ENCODE measurements at regions of chr4 and their contacts with region 1.

Region 1: DNA sequence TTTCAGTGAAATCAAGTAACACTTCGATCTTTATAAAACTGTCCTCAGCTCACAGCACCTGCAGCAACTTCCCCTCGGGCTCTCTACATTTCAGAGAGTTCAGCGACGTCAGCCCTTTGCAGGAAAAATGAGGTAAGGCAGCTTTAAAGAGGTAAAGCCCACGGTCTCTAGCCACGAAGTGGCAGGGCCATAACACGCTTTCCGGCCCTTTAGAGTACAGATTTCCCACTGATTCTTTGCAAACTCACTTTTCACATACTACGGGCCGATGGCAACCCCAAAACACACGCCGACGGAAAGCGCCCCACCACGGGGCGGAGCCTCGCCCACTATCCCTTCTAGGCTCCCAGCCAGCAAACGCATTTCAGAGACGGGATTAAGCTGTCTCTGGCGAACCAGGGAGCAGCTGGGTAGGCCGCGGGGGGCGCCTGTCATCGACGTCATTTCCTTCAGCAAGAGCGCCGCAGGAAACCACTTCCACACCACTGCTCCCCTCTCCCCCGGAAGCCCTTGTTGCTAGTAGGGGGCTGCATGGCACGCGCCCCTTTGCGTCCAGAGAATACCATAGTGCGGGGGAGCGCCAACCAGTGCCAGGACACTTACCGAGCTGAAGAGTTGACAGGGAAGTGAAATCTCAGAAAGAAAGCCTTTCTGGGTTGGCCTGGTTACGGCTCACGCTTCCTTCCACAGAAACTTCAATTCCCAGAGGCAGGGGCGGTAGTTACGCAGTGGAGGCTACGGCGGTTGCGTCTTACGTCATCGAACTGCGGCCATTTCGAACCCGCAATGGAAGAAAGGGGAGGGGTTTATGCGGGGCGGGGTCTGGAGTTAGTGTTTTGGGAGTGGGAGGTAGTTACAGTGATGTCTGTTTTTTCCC is at the start of gene TRMT10A:
- DNase-seq: peak; percentile 98
- ATAC-seq: peak; percentile 84
- H3K4me3 ChIP-seq: peak within 1 kb of the TSS; percentile 73 to 92 (median 80)
- H3K4me3 Mint-ChIP-seq: peak within 1 kb of the TSS; percentile 99
- H3K27ac ChIP-seq: peak within 1 kb of the TSS; percentile 96
- H3K27ac Mint-ChIP-seq: peak within 1 kb of the TSS; percentile 100
- H3K4me1 ChIP-seq: peaks cover 4 to 9% of the 10 kb centered on the region in 2 donors
- H3K4me1 Mint-ChIP-seq: peaks cover 18% of the 10 kb centered on the region
- H3K27me3 ChIP-seq: peaks cover 0 to 9% (median 2%) of the 10 kb centered on the region in 4 experiments
- H3K27me3 Mint-ChIP-seq: peaks cover 24% of the 10 kb centered on the region
- CTCF ChIP-seq: no peak
- total RNA-seq, gene TRMT10A: 4.5 and 5.5 TPM in 2 replicates

Region 2: GRCh38 chr4:98658287-98659105 is 905.1 kb before region 1 on chr4 and contains the start of gene TSPAN5:
- CTCF ChIA-PET with region 1: no interaction called
- POLR2A ChIA-PET with region 1: no interaction called
- intact Hi-C with region 1: loop called (anchors 10 kb)
- DNase-seq: peak; percentile 89
- ATAC-seq: peak; percentile 84
- H3K4me3 ChIP-seq: peak within 1 kb of the TSS; percentile 34 to 92 (median 81)
- H3K4me3 Mint-ChIP-seq: peak within 1 kb of the TSS; percentile 89
- H3K27ac ChIP-seq: peak within 1 kb of the TSS; percentile 37 to 74
- H3K27ac Mint-ChIP-seq: peak within 1 kb of the TSS; percentile 75
- H3K4me1 ChIP-seq: peaks cover 27 to 33% of the 10 kb centered on the region in 2 donors
- H3K4me1 Mint-ChIP-seq: peaks cover 52% of the 10 kb centered on the region
- H3K27me3 ChIP-seq: peaks cover 0 to 10% (median 1%) of the 10 kb centered on the region in 4 experiments
- H3K27me3 Mint-ChIP-seq: peaks cover 8% of the 10 kb centered on the region
- CTCF ChIP-seq: no peak
- total RNA-seq, gene TSPAN5: 5.3 TPM in 2 replicates

Region 3: DNA sequence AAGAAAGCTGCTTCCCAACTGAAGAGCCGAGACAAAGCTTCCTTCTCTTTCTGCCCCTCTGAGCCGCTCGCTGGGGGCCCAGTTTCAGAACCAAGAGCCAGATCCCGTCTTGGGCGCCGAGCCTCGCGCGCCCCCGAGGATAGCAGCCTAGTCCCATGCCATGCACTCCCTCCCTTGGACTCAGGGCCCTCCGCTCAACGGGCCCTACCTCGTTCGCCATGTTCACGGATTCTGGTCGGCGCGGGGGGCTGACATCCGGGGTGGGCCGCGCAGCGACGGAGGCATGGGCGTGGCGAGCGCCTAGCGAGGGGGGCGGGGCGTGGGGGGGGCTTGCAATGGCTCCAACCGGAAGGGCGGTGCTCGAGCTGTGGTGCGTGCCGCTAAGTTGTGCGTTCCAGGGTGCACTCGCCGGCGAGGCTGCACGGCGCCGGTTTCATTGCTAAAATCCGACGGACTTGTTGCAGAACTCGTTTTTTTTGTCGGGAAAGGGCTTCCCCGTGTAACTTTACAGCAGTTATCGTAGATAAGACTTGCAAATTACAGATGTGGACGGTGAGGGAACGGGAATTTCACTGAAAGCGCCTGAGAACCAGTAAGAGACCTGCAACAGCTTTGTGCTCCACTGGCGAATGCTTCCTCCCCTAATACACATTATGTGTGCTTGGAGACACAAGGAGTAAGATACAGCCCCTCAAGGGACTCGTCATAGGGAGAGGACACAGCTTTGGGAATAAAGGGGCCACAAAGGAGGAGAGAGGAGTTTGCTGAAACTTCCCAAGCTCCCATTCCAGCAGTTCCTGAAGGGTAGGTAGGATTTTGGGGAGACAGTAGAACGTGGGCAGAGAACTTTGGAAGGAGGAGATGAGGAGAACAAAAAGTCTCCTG is 474.8 kb before region 1 on chr4 and contains the start of gene ADH5:
- CTCF ChIA-PET with region 1: no interaction called
- POLR2A ChIA-PET with region 1: interaction called, 8 read pairs
- intact Hi-C with region 1: loop called (anchors 5 kb)
- DNase-seq: peak; percentile 90
- ATAC-seq: peak; percentile 95
- H3K4me3 ChIP-seq: peak within 1 kb of the TSS; percentile 75 to 99 (median 96)
- H3K4me3 Mint-ChIP-seq: peak within 1 kb of the TSS; percentile 98
- H3K27ac ChIP-seq: peak within 1 kb of the TSS; percentile 84
- H3K27ac Mint-ChIP-seq: peak within 1 kb of the TSS; percentile 98
- H3K4me1 ChIP-seq: peaks cover 15 to 25% of the 10 kb centered on the region in 2 donors
- H3K4me1 Mint-ChIP-seq: peaks cover 46% of the 10 kb centered on the region
- H3K27me3 ChIP-seq: no peaks in the 10 kb centered on the region
- H3K27me3 Mint-ChIP-seq: no peaks in the 10 kb centered on the region
- CTCF ChIP-seq: no peak
- total RNA-seq, gene ADH5: 59.2 and 65.6 TPM in 2 replicates

Region 4: GRCh38 chr4:99615170-99615820 is 51.7 kb after region 1 on chr4:
- CTCF ChIA-PET with region 1: no interaction called
- POLR2A ChIA-PET with region 1: no interaction called
- intact Hi-C with region 1: no loop called
- DNase-seq: no peak
- ATAC-seq: no peak
- H3K4me3 ChIP-seq: no peak overlapping the region
- H3K4me3 Mint-ChIP-seq: no peak overlapping the region
- H3K27ac ChIP-seq: no peak overlapping the region
- H3K27ac Mint-ChIP-seq: no peak overlapping the region
- H3K4me1 ChIP-seq: no peaks in the 10 kb centered on the region
- H3K4me1 Mint-ChIP-seq: no peaks in the 10 kb centered on the region
- H3K27me3 ChIP-seq: peaks cover 0 to 4% (median 0%) of the 10 kb centered on the region in 4 experiments
- H3K27me3 Mint-ChIP-seq: peaks cover 25% of the 10 kb centered on the region
- CTCF ChIP-seq: no peak

Region 5: DNA sequence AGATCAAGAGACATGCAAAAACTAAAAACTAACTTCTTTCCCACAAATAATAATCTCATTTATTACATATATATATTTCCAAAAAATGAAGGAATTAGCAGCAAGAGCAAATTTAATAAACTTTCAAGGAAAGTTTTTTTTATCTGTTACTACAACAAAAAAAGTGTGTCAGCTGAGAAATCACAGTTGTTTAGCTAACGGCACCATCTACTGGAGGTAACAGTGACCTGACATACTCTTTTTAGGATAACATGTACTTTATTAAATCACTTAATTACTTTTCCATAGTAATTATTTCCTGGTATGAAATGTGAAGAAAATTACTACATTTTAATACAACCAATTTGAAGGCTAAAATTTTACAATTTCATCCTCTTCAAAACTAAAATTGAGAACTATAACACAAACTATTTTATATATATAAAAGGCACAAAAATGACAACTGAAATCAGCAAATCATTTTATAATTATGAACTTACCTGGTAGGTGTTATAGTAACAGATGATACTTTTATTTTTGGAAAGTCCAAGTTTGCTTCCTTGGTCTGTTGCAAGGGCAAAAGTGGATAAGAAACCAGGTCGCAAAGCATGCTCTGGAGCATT is 321.6 kb after region 1 on chr4:
- CTCF ChIA-PET with region 1: interaction called, 8 read pairs
- POLR2A ChIA-PET with region 1: no interaction called
- intact Hi-C with region 1: loop called (anchors 1 kb)
- DNase-seq: peak; percentile 68
- ATAC-seq: no peak
- H3K4me3 ChIP-seq: no peak overlapping the region
- H3K4me3 Mint-ChIP-seq: no peak overlapping the region
- H3K27ac ChIP-seq: no peak overlapping the region
- H3K27ac Mint-ChIP-seq: no peak overlapping the region
- H3K4me1 ChIP-seq: no peaks in the 10 kb centered on the region
- H3K4me1 Mint-ChIP-seq: peaks cover 2% of the 10 kb centered on the region
- H3K27me3 ChIP-seq: no peaks in the 10 kb centered on the region
- H3K27me3 Mint-ChIP-seq: no peaks in the 10 kb centered on the region
- CTCF ChIP-seq: peak; percentile 81

Region 6: GRCh38 chr4:99894161-99894997 is 330.8 kb after region 1 on chr4 and contains the start of gene LAMTOR3:
- CTCF ChIA-PET with region 1: interaction called, 18 read pairs
- POLR2A ChIA-PET with region 1: interaction called, 5 read pairs
- intact Hi-C with region 1: loop called (anchors 1 kb)
- DNase-seq: peak; percentile 95
- ATAC-seq: peak; percentile 97
- H3K4me3 ChIP-seq: peak within 1 kb of the TSS; percentile 32 to 94 (median 79)
- H3K4me3 Mint-ChIP-seq: peak within 1 kb of the TSS; percentile 98
- H3K27ac ChIP-seq: peak within 1 kb of the TSS; percentile 74 to 97
- H3K27ac Mint-ChIP-seq: peak within 1 kb of the TSS; percentile 95
- H3K4me1 ChIP-seq: peaks cover 14 to 18% of the 10 kb centered on the region in 2 donors
- H3K4me1 Mint-ChIP-seq: peaks cover 32% of the 10 kb centered on the region
- H3K27me3 ChIP-seq: no peaks in the 10 kb centered on the region
- H3K27me3 Mint-ChIP-seq: no peaks in the 10 kb centered on the region
- CTCF ChIP-seq: no peak
- total RNA-seq, gene LAMTOR3: 18.0 and 20.1 TPM in 2 replicates

Measured in B cell (primary cell).